Lower leg skin (tissue), 4 donors: ENCODE measurements at regions of chr2 and their contacts with region 1.

Region 1: GRCh38 chr2:170973492-170974303 is 44.6 kb downstream of the GORASP2 start:
- DNase-seq: peak; percentile 81 to 97
- H3K4me3 ChIP-seq: peak overlapping the region; percentile 49
- CTCF ChIP-seq: no peak
- POLR2A ChIP-seq: no peak

Region 2: GRCh38 chr2:170582747-170583463 is 390.8 kb before region 1 on chr2:
- intact Hi-C with region 1: no loop called
- DNase-seq: no peak
- H3K4me3 ChIP-seq: no peak overlapping the region
- CTCF ChIP-seq: no peak
- POLR2A ChIP-seq: no peak

Region 3: GRCh38 chr2:171160119-171160955 is 186.6 kb after region 1 on chr2 and contains the start of gene TLK1:
- intact Hi-C with region 1: loop called (anchors 5 kb)
- DNase-seq: peak; percentile 47 to 93
- H3K4me3 ChIP-seq: peak within 1 kb of the TSS; percentile 95
- CTCF ChIP-seq: no peak
- POLR2A ChIP-seq: no peak
- total RNA-seq, gene TLK1: 22.9 to 68.3 (median 26.2) TPM

Region 4: DNA sequence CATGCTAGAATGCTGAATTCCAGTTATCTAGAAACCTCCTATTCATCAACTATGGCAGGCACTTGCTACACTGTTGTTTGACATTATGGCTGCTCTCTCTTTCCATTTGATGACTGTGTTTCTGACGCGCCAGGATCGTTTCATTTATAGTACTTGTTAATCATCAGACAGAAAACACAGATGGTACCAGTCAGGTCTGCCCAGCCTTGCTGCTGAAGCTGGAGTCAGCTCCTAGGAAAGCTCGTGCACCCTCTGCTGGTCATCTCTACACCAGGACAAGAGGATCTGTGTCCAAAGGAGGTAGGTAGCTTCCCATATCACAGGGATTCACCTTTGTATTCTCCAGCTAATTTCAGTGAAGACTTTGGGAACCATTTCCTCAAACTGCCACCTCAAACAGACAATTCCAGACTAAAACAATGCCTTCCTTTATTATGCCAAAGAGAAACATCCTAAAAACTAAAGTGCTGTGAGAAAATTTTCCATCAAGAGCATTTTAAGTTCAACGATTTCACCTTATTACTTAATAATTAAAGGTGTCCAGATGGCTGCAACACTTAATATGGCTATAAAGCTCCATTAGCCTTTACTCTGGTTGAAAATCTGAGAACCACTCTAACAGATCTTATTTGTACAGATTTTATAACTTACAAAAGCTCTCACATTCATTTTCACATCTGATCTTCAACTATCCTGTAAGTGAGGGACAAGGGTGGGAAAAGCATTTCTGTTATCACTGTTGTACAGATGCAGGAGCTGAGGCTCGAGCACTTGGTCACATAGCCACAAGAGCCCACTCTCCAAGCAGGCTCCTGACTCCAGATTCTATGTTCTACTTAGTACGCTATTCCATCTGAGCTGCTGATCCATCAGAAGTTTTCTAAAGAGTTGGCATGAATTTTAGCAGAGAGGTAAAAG is 442.6 kb after region 1 on chr2:
- intact Hi-C with region 1: loop called (anchors 5 kb)
- DNase-seq: peak; percentile 90 to 96
- H3K4me3 ChIP-seq: no peak overlapping the region
- CTCF ChIP-seq: peak in 1 of 3 donors; percentile 78
- POLR2A ChIP-seq: no peak